ENCODE measurements at regions of chr2 and their contacts with region 1.

Region 1: DNA sequence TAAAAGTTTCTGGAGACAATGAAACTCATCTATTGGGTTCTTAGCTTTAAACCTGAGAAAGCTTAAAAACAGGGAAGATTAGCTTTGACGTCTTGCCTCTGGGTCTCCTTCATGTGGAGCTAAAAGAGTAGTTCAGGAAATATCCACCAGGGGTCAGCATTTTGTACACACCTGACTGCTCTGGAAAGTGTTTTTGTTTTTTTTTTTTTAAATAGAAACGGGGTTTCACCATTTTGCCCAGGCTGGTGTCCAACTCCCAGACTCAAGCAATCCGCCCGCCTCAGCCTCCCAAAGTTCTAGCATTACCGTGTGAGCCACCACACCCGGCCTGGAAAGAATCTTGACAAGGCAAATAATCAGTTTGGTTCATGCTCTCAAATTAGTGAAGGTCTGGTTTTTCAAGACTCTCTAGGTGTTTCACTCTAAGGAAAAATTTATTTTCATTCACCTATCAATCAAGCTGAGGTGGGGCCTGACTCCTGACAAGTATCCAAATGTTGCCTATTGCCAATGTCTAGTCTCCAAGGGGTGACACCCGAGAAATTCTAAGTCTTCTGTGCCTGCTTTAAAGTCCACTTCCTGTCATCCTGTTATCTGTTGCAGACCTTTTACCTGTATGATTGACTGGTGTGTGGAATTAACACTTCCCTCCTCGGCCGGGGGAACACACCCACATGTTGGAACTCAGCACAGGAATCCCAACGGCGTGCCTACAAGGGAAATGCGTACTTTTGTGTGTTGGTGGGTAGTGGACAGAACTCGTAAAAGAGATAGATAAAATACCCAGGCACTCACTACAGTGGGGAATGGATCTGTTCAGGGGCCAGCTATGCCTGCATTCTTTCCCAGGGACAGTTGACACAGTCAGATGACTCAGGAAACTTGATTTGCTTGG is 11.3 kb downstream of the IL1RN start:
- DNase-seq: no peak

Region 2: GRCh38 chr2:113198790-113199612 is 60.3 kb after region 1 on chr2:
- intact Hi-C with region 1: loop called (anchors 2 kb)
- DNase-seq: peak; percentile 89

Region 3: DNA sequence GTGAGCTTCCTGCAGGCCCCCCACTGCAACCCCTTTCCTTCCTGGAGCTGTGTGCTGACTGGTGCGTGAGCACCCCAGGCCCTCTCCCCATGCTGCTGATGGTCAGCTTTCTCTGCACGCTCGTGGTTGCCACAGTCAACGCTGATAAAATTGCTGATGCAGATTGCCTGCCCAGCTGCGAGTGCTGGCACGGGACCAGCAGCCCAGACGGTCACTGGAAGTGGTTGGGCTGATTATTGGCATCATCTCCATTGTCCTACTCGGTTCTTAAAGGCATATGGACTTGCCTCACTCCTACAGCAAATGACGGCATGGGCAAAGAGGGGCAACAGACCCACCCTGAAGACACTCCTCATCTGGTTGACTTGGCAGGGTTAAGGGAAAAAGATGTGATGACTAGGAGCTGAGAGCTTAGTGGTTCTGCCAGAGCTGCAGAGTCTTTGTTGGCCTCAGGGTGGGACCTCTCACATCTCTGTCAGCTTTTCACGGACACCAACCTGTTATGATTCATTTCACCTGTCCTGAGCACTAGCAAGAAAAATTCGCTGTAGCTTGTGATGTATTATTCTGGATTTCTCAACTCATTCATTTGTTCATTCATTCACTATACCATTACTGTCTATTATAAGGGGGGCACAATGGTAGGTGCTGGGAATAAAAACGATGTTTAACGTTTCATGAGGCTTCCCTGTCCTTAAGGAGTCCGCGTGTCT is 101.6 kb after region 1 on chr2:
- intact Hi-C with region 1: loop called (anchors 5 kb)
- DNase-seq: peak; percentile 86

Region 4: GRCh38 chr2:113370478-113371091 is 231.9 kb after region 1 on chr2:
- intact Hi-C with region 1: loop called (anchors 5 kb)
- DNase-seq: no peak

Measured in cardiac septum (tissue), 1 donor.